Calu3 (cell line): ENCODE measurements at regions of chr3 and their contacts with region 1.

Region 1: GRCh38 chr3:143786219-143787191 is 61.8 kb downstream of the SLC9A9 start:
- DNase-seq: no peak
- H3K4me3 Mint-ChIP-seq: no peak overlapping the region
- H3K27ac Mint-ChIP-seq: no peak overlapping the region
- H3K4me1 Mint-ChIP-seq: peaks cover 7% of the 10 kb centered on the region
- H3K27me3 Mint-ChIP-seq: no peaks in the 10 kb centered on the region
- CTCF ChIP-seq: no peak

Region 2: DNA sequence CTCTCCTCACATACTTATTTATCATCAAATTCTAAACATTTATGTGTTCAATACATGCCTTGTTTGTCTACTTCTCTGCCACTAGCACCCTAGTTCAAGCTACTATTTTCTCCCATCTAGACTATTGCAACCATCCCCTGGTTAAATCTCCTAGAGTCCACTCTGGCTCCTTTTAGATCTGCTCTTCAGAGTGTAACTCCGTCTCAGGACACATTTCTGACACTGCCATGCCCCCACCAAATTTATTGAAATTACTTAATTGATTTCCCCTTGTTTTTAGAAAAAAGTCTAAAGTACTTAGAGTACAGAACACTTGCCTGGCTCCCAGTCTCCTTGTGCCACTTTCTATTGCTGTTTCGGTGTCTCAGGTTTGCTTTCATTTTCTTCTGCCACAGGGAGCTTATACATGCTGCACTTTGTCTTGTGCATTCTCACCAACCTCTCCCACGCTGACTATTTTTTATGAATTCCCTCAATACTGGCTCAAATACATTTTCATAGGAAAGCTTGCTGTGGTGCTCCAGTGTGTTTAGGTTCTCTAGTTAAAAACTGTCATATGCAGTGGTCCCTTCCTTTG is 977.5 kb after region 1 on chr3:
- CTCF ChIA-PET with region 1: no interaction called
- intact Hi-C with region 1: loop called (anchors 10 kb)
- DNase-seq: no peak
- H3K4me3 Mint-ChIP-seq: peak overlapping the region; percentile 61
- H3K27ac Mint-ChIP-seq: peak overlapping the region; percentile 77
- H3K4me1 Mint-ChIP-seq: peaks cover 11% of the 10 kb centered on the region
- H3K27me3 Mint-ChIP-seq: no peaks in the 10 kb centered on the region
- CTCF ChIP-seq: no peak